Sigmoid colon (tissue), 7 donors: ENCODE measurements at regions of chr16 and their contacts with region 1.

Region 1: GRCh38 chr16:1361685-1362360 is 10.1 kb downstream of the GNPTG start:
- DNase-seq: no peak
- H3K4me3 ChIP-seq: no peak overlapping the region
- H3K27ac ChIP-seq: no peak overlapping the region
- H3K4me1 ChIP-seq: no peaks in the 10 kb centered on the region
- H3K27me3 ChIP-seq: no peaks in the 10 kb centered on the region
- CTCF ChIP-seq: no peak
- EP300 ChIP-seq: no peak
- POLR2A ChIP-seq: no peak

Region 2: GRCh38 chr16:1331712-1332617 is 29.9 kb before region 1 on chr16:
- intact Hi-C with region 1: no loop called
- DNase-seq: peak; percentile 86
- H3K4me3 ChIP-seq: peak overlapping the region; percentile 8 to 41 (median 34)
- H3K27ac ChIP-seq: peak overlapping the region in 3 of 4 donors; percentile 4 to 37 (median 20)
- H3K4me1 ChIP-seq: peaks cover 0 to 34% (median 26%) of the 10 kb centered on the region in 4 donors
- H3K27me3 ChIP-seq: peaks cover 33 to 63% (median 51%) of the 10 kb centered on the region in 3 donors
- CTCF ChIP-seq: no peak
- EP300 ChIP-seq: no peak
- POLR2A ChIP-seq: no peak

Region 3: GRCh38 chr16:1408171-1408837 is 46.5 kb after region 1 on chr16:
- intact Hi-C with region 1: loop called (anchors 2 kb)
- DNase-seq: peak; percentile 97
- H3K4me3 ChIP-seq: peak overlapping the region in 3 of 4 donors; percentile 34 to 49 (median 43)
- H3K27ac ChIP-seq: peak overlapping the region; percentile 23 to 68 (median 60)
- H3K4me1 ChIP-seq: peaks cover 0 to 37% (median 33%) of the 10 kb centered on the region in 4 donors
- H3K27me3 ChIP-seq: no peaks in the 10 kb centered on the region
- CTCF ChIP-seq: no peak
- EP300 ChIP-seq: no peak
- POLR2A ChIP-seq: no peak

Region 4: DNA sequence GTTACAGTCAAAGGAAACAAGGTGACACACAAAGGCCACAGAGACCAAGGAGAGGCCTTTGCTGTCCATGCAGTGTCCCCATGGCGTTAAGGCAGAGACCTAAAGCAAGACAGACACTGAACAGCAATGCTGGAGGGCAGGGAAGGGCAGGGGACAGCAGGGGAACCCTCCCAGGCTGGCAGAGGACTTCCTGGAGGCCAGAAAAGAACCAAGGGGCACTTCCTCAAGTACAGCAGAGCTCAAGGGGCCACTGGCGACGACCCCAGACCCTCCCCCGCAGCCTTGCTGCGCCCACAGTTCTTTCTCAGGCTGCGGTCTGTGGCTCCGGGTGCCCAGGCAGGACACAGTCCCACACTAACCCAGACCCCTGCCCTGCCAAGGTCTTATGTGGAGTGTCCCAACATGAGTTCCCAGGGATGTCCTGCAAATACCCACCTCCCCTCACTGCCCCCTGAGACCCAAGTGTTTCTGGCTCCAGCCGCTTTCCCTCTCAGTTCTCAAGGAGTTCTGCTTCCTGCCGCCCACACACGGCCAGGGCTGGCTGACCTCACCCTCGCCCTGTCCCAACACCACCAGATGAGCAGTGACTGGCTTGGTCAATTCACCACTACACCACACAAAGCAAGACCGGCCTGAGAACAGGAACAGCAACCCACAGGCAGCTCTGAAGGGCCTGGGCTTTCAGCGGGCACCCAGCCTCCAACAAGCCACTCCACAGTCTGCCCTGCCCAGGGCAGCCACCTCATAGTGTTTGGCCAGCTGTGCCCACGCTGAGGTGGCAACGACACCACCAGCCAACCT is 108.9 kb after region 1 on chr16:
- intact Hi-C with region 1: no loop called
- DNase-seq: no peak
- H3K4me3 ChIP-seq: no peak overlapping the region
- H3K27ac ChIP-seq: peak overlapping the region in 1 of 4 donors; percentile 31
- H3K4me1 ChIP-seq: peaks cover 0 to 38% (median 30%) of the 10 kb centered on the region in 4 donors
- H3K27me3 ChIP-seq: no peaks in the 10 kb centered on the region
- CTCF ChIP-seq: no peak
- EP300 ChIP-seq: no peak
- POLR2A ChIP-seq: no peak

Region 5: DNA sequence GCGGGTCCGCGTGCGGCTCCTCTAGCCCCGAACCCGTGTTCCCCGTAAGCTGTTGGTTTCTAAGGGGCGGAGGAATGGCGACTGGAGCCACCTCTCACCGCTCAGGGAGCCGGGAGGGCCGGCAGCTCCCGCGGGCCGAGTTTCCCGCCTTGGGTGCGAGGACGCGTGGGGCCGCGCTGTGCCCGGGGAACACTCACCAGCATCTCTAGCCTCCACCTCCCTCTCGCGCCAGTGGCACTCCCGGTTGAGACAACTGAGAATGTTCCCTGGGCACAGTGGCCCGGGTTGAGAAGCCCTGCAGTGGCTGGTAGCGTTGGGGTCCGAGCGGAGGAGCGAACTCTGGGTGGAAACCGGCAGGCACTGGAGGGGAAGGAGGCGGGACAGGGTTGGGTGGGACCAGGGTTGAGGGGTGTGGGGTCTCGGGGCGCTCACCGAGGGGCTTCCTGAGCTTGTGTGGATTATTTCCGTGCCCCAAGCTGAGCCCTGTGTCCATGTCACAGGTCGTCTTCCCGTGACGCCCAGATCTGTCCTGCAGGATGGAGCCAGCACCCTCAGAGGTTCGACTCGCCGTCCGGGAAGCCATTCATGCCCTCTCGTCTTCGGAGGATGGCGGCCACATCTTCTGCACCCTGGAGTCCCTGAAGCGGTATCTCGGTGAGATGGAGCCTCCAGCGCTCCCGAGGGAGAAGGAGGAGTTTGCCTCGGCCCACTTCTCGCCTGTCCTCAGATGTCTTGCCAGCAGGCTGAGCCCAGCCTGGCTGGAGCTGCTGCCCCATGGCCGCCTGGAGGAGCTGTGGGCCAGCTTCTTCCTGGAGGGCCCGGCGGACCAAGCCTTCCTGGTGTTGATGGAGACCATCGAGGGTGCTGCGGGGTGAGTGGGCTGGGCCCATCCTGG is 132.2 kb after region 1 on chr16:
- intact Hi-C with region 1: no loop called
- DNase-seq: peak; percentile 81
- H3K4me3 ChIP-seq: peak overlapping the region; percentile 72 to 84 (median 79)
- H3K27ac ChIP-seq: peak overlapping the region; percentile 87 to 93 (median 88)
- H3K4me1 ChIP-seq: peaks cover 0 to 30% (median 25%) of the 10 kb centered on the region in 4 donors
- H3K27me3 ChIP-seq: no peaks in the 10 kb centered on the region
- CTCF ChIP-seq: peak in 3 of 4 experiments; percentile 11 to 38 (median 38)
- EP300 ChIP-seq: no peak
- POLR2A ChIP-seq: no peak